IMR-90 (cell line): ENCODE measurements at regions of chr10 and their contacts with region 1.

Region 1: DNA sequence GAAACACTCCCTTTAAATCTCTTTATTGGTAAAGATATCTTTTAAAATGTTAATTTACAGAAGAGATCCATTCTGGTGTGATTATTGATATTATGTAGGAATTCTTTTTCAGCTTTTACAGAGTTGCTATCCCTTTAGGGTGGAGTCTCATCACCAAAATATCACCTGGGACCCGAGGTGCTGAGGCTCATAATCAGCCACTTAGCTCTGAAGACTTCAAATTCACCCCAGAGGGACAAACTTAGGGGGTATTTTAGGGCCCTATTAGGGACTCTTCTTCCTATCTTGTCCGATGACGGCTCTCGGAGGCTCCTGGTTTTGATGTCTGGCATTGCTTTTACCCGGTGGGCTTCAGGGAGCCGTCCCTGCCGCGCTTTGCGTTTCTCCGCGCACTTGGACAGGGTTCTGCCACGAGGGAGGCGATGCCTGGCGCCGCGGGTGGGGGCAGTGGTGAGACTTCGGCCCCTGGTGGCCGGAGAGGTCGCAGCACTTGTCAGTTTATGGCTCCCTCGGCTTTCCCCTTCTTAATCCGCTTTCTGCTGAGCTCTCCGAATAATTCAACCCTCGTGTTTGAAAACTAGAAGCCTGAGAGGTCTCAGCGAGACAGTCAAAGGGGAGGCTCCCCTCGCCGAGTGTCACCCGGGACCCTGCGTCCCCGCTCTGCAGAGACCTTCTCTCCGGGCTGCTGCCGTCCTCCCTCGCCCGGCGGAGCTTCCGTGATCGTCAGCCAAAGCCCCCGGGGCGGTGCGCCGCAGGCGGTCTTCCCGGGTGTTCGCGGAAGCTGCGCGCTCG is 27.8 kb downstream of the RBM20 start:
- DNase-seq: peak; percentile 67
- ATAC-seq: peak; percentile 99
- H3K4me3 ChIP-seq: peak overlapping the region; percentile 54
- H3K27ac ChIP-seq: peak overlapping the region; percentile 44
- H3K4me1 ChIP-seq: no peaks in the 10 kb centered on the region
- H3K27me3 ChIP-seq: peaks cover 13% of the 10 kb centered on the region
- CTCF ChIP-seq: peak; percentile 99
- POLR2A ChIP-seq: no peak
- RAD21 ChIP-seq: peak; percentile 66

Region 2: DNA sequence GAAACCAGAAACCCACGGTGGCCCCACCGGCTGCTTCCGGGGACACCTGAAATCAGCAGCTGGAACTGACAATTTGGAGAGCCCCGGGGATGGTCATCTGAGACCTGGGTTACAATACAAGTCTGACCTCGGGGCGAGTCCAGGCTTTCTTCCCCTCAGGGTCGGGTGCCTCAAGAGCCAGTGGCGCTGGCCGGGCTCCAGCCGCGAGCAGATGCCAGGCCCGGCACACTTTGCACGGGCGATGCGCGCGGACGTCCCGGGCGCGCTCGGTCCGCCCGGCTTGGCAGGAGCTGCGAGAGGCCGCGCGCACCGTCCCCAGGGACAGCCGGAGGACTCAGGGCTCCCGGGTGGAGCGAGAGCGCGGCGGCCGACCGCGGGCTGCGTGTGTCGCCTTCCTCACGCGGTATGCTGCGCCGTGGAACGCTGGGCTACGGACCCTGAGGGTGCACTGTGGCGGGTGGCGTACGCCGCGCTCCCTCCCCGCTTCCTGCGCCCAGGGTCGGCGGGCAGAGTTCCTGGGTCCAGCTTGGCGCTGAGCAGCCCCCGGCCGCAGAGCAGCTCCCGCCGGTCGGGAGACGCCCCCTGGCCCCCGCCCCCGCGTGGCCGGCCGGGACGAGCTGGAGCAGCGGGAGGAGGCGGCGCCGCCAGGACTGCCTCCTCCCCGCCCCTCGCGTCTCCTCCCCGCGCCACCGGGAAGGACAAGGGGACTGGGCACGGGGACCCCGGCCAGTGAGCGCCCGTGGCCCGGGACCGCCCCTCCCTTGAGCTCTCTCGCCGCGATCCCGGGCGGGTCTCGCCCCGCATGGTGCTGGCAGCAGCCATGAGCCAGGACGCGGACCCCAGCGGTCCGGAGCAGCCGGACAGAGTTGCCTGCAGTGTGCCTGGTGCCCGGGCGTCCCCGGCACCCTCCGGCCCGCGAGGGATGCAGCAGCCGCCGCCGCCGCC is 28.1 kb before region 1 on chr10 and contains the start of gene RBM20:
- CTCF ChIA-PET with region 1: interaction called, 11 read pairs
- POLR2A ChIA-PET with region 1: no interaction called
- dilution Hi-C with region 1: no loop called
- in situ Hi-C with region 1: no loop called
- intact Hi-C with region 1: no loop called
- DNase-seq: no peak
- ATAC-seq: peak; percentile 83
- H3K4me3 ChIP-seq: peak within 1 kb of the TSS; percentile 95
- H3K27ac ChIP-seq: no peak within 1 kb of the TSS
- H3K4me1 ChIP-seq: peaks cover 2% of the 10 kb centered on the region; the same call in 1 of the 2 replicates
- H3K27me3 ChIP-seq: peaks cover 45% of the 10 kb centered on the region
- CTCF ChIP-seq: no peak
- POLR2A ChIP-seq: no peak
- RAD21 ChIP-seq: no peak
- total RNA-seq, gene RBM20: under 0.01 TPM in 2 replicates

Region 3: GRCh38 chr10:110967645-110968044 is 295.7 kb after region 1 on chr10:
- CTCF ChIA-PET with region 1: no interaction called
- POLR2A ChIA-PET with region 1: no interaction called
- dilution Hi-C with region 1: no loop called
- in situ Hi-C with region 1: no loop called
- intact Hi-C with region 1: no loop called
- DNase-seq: no peak
- ATAC-seq: no peak; the same call in 1 of the 2 replicates
- H3K4me3 ChIP-seq: no peak overlapping the region
- H3K27ac ChIP-seq: no peak overlapping the region
- H3K4me1 ChIP-seq: no peaks in the 10 kb centered on the region
- H3K27me3 ChIP-seq: no peaks in the 10 kb centered on the region
- CTCF ChIP-seq: no peak
- POLR2A ChIP-seq: no peak
- RAD21 ChIP-seq: no peak